Right cardiac atrium (tissue), 5 donors: ENCODE measurements at regions of chr19 and their contacts with region 1.

Region 1: DNA sequence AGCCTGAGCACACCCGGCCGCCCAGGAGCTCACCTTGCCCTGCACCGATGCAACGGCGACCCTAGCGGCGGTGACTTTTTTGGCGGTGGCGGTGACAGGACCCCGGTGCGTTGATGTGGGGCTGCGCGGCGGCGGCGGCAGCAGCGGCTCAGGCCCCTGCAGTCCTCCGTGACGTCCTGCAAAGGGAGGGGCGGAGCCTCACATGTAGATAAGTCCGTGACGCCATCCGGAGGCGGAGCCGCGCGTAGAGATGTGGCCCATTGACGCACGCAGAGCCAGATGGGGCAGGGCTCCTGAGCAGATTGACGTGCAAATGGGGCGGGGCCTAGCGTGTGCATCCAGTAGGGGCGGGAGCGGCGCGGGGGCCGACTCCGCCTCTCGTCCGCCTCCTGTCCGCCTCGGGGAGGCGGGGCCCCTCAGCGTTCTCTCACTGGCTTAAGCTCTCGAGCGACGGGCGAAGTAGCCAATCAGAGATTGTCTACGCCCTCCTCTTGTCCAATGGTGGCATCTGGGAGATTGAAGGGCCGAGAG is at the start of gene RAB3A:
- DNase-seq: peak; percentile 100
- ATAC-seq: peak; percentile 96
- H3K4me3 ChIP-seq: peak within 1 kb of the TSS; percentile 71
- H3K27ac ChIP-seq: peak within 1 kb of the TSS; percentile 95
- H3K4me1 ChIP-seq: peaks cover 5% of the 10 kb centered on the region
- H3K27me3 ChIP-seq: no peaks in the 10 kb centered on the region
- total RNA-seq, gene RAB3A: 23.1 to 41.5 (median 29.5) TPM

Region 2: DNA sequence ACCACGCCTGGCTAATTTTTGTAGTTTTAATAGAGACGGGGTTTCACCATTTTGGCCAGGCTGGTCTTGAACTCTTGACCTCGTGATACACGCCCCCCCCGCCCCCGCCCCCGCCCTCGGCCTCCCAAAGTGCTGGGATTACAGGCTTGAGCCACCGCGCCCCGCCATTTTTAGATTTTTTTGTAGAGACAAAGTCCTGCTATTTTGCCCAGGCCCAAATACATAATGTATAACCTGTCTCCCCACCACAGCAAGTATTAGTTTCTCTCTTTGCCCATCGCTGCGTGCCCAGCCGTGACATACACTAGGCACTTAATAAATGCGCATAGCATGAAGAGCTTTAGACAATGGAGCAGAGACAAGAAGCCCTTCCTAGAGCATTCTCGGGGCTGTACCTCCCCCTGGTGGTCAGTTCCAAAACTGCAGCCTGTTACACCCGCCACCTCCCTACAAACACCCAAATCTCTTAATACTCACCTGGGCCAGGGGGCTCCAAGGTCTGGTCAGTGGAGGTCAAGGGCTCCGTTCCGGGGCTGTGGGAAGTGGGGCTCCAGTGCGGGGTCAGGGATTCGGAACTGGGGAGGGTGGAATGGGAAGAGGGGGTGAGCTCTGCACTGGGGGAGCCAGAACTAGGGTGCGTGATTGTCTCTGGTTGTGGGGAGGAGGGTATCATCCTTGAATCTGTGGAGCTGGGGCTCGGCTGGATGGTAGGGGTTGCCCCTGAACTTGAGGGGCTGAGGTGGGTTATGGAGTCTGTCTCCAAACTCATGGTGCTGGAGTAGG is 47.9 kb after region 1 on chr19:
- intact Hi-C with region 1: loop called in 2 of 4 experiments (anchors 2 to 5 kb)
- DNase-seq: peak; percentile 66 to 83 (median 83)
- ATAC-seq: peak; percentile 62 to 66
- H3K4me3 ChIP-seq: no peak overlapping the region
- H3K27ac ChIP-seq: no peak overlapping the region
- H3K4me1 ChIP-seq: no peaks in the 10 kb centered on the region
- H3K27me3 ChIP-seq: no peaks in the 10 kb centered on the region

Region 3: GRCh38 chr19:18322759-18323460 is 119.0 kb after region 1 on chr19 and contains the start of gene LSM4:
- intact Hi-C with region 1: loop called in 1 of 4 experiments (anchors 10 kb)
- DNase-seq: peak; percentile 97 to 99 (median 99)
- ATAC-seq: peak; percentile 96 to 97
- H3K4me3 ChIP-seq: peak within 1 kb of the TSS; percentile 80
- H3K27ac ChIP-seq: peak within 1 kb of the TSS; percentile 93
- H3K4me1 ChIP-seq: peaks cover 6% of the 10 kb centered on the region
- H3K27me3 ChIP-seq: no peaks in the 10 kb centered on the region
- total RNA-seq, gene LSM4: 55.6 to 77.2 (median 64.8) TPM

Region 4: DNA sequence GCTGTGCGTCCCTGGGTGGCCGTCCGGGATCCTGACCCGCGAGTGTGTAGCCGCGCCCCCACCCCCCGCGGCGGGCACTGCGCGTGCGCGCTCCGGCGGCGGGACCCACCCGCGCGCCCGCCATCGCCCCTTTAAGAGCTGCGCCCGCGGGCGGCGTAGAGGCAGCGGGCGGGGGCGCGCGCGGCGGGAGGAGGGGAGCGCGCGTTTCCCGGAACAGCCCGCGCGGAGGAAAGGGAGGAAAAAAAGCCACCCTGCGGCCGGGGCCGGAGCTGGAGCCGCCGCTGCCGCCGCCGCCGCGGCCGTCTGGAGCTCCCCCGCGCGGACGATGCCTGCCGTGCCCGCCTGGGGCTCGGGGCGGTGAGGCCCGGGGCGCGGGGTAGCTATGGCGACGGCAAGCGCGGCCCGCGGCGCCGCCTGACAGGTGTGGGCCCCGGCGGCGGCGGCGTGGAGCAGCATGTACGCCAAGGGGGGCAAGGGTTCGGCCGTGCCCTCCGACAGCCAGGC is 215.3 kb after region 1 on chr19 and contains the start of gene SSBP4:
- intact Hi-C with region 1: loop called in 2 of 4 experiments (anchors 10 kb)
- DNase-seq: peak; percentile 77 to 93 (median 93)
- ATAC-seq: peak in 1 of 2 donors; percentile 5
- H3K4me3 ChIP-seq: peak within 1 kb of the TSS; percentile 69
- H3K27ac ChIP-seq: peak within 1 kb of the TSS; percentile 62
- H3K4me1 ChIP-seq: peaks cover 12% of the 10 kb centered on the region
- H3K27me3 ChIP-seq: no peaks in the 10 kb centered on the region
- total RNA-seq, gene SSBP4: 32.7 to 40.0 (median 37.8) TPM